CD4-positive, alpha-beta T cell (primary cell): ENCODE measurements at regions of chr2 and their contacts with region 1.

Region 1: DNA sequence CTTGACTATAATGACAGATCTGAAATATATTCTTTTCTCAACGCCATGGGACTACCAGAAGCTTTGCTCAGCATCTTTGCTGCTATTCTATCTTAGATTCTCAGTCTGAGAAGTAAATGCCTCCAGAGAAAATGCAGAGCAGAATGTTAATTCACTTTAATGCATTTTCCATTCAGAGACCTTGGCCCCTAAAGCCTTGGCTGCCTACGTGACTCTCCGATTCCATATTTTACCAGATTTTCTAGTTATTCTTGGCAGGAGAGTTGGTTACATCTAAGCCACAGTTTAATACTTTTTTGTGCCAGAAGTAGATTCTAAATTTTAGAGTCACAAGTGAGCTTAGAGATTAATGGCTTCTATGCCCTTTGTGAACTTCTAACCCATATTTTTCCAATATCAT is 837.1 kb upstream of the POU3F3 start:
- DNase-seq: no peak
- ATAC-seq: no peak
- H3K4me3 ChIP-seq: no peak overlapping the region
- H3K4me3 Mint-ChIP-seq: no peak overlapping the region
- H3K27ac ChIP-seq: no peak overlapping the region
- H3K27ac Mint-ChIP-seq: no peak overlapping the region
- H3K4me1 ChIP-seq: no peaks in the 10 kb centered on the region
- H3K4me1 Mint-ChIP-seq: no peaks in the 10 kb centered on the region
- H3K27me3 ChIP-seq: no peaks in the 10 kb centered on the region
- H3K27me3 Mint-ChIP-seq: no peaks in the 10 kb centered on the region
- CTCF ChIP-seq: no peak

Region 2: DNA sequence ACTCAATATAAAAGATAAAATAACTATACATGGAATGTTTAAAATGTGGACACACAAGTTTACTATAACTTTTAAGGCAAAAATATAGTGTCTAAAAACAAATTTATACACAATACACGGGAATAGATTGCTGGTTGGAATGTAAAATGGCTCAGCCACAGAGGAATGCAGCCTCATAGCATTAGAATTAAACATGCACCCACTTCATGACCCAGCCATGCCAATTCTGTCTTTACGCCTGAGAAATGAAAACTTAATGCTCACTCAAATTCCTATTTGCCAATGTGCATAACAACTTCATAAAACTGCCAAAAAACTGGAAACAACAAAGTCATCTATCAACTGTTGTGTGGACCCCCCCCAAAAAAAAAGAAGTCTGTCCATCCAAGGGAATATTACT is 169.5 kb before region 1 on chr2:
- CTCF ChIA-PET with region 1: no interaction called
- POLR2A ChIA-PET with region 1: no interaction called
- intact Hi-C with region 1: no loop called
- DNase-seq: no peak
- ATAC-seq: no peak
- H3K4me3 ChIP-seq: no peak overlapping the region
- H3K4me3 Mint-ChIP-seq: no peak overlapping the region
- H3K27ac ChIP-seq: no peak overlapping the region
- H3K27ac Mint-ChIP-seq: no peak overlapping the region
- H3K4me1 ChIP-seq: no peaks in the 10 kb centered on the region
- H3K4me1 Mint-ChIP-seq: no peaks in the 10 kb centered on the region
- H3K27me3 ChIP-seq: no peaks in the 10 kb centered on the region
- H3K27me3 Mint-ChIP-seq: no peaks in the 10 kb centered on the region
- CTCF ChIP-seq: no peak

Region 3: DNA sequence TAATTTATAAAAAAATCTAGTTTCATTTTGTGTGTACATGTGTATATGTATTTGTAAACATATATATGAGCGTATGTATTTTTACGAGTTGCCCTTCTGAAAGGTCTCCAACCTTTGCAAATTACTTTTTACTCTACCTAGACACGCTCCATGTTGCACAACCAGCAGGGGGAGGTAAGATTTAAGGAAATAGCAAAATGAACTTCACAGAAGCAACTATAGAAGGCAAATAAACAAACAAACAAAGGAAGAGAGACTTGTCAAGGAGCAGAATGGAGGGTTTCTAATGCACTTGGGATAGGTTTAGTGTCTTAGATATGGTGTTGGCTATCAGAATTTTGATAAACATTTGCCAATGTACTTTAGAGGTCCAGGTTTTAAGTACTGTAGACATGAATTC is 16.6 kb after region 1 on chr2:
- CTCF ChIA-PET with region 1: no interaction called
- POLR2A ChIA-PET with region 1: no interaction called
- intact Hi-C with region 1: loop called in 1 of 2 experiments (anchors 1 kb)
- DNase-seq: no peak
- ATAC-seq: no peak
- H3K4me3 ChIP-seq: no peak overlapping the region
- H3K4me3 Mint-ChIP-seq: no peak overlapping the region
- H3K27ac ChIP-seq: no peak overlapping the region
- H3K27ac Mint-ChIP-seq: no peak overlapping the region
- H3K4me1 ChIP-seq: no peaks in the 10 kb centered on the region
- H3K4me1 Mint-ChIP-seq: no peaks in the 10 kb centered on the region
- H3K27me3 ChIP-seq: no peaks in the 10 kb centered on the region
- H3K27me3 Mint-ChIP-seq: no peaks in the 10 kb centered on the region
- CTCF ChIP-seq: no peak